ENCODE measurements at regions of chr17 and their contacts with region 1.

Region 1: DNA sequence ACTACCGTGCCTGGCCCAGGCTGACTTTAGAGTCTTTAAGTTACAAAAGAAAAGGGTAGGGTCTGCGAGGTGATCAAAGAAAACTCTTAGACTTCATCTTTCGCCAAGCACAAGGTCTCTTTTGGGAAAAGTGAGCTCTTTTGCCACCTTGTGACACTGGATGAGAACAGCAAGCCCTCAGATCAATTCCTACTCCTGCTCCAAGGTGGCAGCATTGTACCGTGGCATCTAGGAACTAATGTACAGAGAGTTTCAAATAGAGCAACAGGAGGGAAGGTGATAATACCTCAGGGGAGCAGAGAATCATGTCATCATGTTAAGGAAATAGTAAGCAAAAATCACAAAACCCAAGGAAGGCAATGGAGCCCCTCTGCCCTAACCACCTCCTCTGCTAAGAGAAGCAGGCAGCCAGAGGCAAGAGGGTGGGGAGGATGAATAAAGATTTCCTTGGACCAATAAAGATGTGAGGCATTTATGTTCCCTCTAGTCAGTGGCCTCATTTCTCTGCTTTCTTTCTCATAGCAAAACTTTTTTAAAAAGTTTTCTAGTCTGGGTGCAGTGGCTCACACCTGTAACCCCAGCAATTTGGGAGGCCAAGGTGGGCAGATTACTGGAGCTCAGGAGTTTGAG is 2.1 kb upstream of the C17orf78 start:
- DNase-seq: peak in 1 of 2 donors; percentile 53
- ATAC-seq: peak; percentile 72 to 90 (median 84)
- H3K4me3 ChIP-seq: no peak overlapping the region
- H3K27ac ChIP-seq: no peak overlapping the region
- H3K4me1 ChIP-seq: peaks cover 0 to 2% (median 0%) of the 10 kb centered on the region in 9 donors
- H3K27me3 ChIP-seq: no peaks in the 10 kb centered on the region
- CTCF ChIP-seq: peak; percentile 64 to 96 (median 89)

Region 2: DNA sequence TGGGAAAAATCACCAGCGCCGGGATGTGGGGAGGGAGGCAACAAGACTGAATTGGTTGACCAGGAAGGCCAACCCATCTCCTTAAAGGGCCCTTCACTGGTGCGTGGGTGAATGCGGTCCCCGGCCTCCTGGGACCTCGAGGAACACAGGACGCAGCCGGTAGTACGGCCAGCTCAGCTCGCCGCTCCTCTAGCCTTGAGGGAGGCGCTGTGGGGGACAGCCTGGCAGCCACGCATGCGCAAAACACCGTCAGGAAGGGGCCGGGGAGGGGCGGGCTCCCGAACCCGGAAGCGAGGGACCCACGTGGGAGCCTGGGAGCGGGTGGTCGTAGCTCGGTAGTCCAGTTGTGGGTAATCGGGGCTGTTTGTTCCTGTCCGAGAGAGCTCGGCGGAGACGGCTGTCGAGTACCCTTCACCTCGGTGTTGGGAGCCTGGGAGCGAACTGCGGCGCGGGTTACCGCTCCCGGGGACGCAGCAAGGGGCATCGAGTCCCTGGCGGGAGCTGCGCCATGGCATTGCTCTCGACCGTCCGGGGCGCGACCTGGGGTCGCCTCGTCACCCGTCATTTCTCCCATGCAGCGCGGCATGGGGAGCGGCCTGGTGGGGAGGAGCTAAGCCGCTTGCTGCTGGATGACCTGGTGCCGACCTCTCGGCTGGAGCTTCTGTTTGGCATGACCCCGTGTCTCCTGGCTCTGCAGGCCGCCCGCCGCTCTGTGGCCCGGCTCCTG is 772.2 kb before region 1 on chr17 and contains the start of gene MRM1:
- intact Hi-C with region 1: loop called in 1 of 10 experiments (anchors 10 kb)
- DNase-seq: peak; percentile 94 to 95
- ATAC-seq: peak; percentile 94 to 98 (median 96)
- H3K4me3 ChIP-seq: peak within 1 kb of the TSS; percentile 67 to 98 (median 90)
- H3K27ac ChIP-seq: peak within 1 kb of the TSS; percentile 60 to 90 (median 84)
- H3K4me1 ChIP-seq: peaks cover 0 to 26% (median 19%) of the 10 kb centered on the region in 9 donors
- H3K27me3 ChIP-seq: no peaks in the 10 kb centered on the region
- CTCF ChIP-seq: peak in 3 of 9 donors; percentile 5 to 45 (median 41)
- total RNA-seq, gene MRM1: 5.5 to 8.8 (median 6.8) TPM